ENCODE measurements at regions of chr19 and their contacts with region 1.

Region 1: GRCh38 chr19:45643024-45643926 is 4.1 kb upstream of the EML2 start:
- DNase-seq: peak; percentile 85
- H3K4me3 ChIP-seq: peak overlapping the region in 1 of 3 experiments; percentile 13
- H3K27ac ChIP-seq: peak overlapping the region; percentile 9
- H3K4me1 ChIP-seq: peaks cover 42% of the 10 kb centered on the region
- H3K27me3 ChIP-seq: no peaks in the 10 kb centered on the region
- CTCF ChIP-seq: peak; percentile 98 to 99
- POLR2A ChIP-seq: no peak

Region 2: DNA sequence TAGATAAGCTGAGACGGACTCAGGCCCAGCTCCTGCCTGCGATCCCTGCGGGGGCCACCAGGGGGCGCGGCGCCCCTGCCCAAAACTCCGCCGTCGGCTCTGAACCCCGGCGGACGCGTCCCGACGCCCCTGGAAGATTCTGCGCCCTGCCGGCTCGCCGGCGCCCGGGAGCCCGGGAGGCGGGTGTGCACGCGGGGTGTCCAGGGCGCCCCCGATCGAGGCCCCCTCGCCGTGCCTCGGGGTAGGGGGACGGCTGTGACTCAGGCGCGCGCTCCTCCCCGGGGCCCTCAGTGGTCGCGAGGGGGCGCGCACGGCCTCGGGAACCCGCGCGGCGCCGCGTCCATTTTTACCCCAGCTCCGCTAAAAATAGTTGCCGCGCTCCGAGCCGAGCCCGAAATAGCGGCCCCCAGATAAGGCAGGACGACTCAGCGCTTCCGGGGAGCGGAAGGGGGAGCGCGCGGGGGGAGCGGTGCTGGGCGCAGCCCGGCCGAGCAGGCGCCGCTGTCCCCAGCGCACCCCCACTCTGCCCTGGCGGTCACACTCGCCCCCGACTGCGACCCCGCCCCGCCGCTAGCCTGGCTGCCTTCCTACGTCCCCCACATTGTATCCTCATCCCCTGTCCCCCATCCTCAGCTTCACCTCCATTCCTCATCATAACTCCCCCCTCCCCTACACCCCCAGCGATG is 203.6 kb before region 1 on chr19:
- CTCF ChIA-PET with region 1: interaction called, 28 read pairs
- POLR2A ChIA-PET with region 1: no interaction called
- dilution Hi-C with region 1: no loop called
- intact Hi-C with region 1: loop called (anchors 1 kb)
- DNase-seq: peak; percentile 65
- H3K4me3 ChIP-seq: peak overlapping the region; percentile 48 to 64 (median 52)
- H3K27ac ChIP-seq: peak overlapping the region; percentile 59
- H3K4me1 ChIP-seq: peaks cover 15% of the 10 kb centered on the region
- H3K27me3 ChIP-seq: no peaks in the 10 kb centered on the region
- CTCF ChIP-seq: peak; percentile 88 to 99
- POLR2A ChIP-seq: no peak

Region 3: GRCh38 chr19:45506246-45506990 is 136.9 kb before region 1 on chr19:
- CTCF ChIA-PET with region 1: interaction called, 5 read pairs
- POLR2A ChIA-PET with region 1: no interaction called
- dilution Hi-C with region 1: no loop called
- intact Hi-C with region 1: loop called (anchors 1 kb)
- DNase-seq: peak; percentile 88
- H3K4me3 ChIP-seq: peak overlapping the region; percentile 92 to 100 (median 96)
- H3K27ac ChIP-seq: peak overlapping the region; percentile 69
- H3K4me1 ChIP-seq: peaks cover 23% of the 10 kb centered on the region
- H3K27me3 ChIP-seq: no peaks in the 10 kb centered on the region
- CTCF ChIP-seq: peak; percentile 36 to 64
- POLR2A ChIP-seq: peak; percentile 71

Region 4: GRCh38 chr19:45569619-45570421 is 73.5 kb before region 1 on chr19:
- CTCF ChIA-PET with region 1: interaction called, 7 read pairs
- POLR2A ChIA-PET with region 1: no interaction called
- dilution Hi-C with region 1: no loop called
- intact Hi-C with region 1: loop called (anchors 1 kb)
- DNase-seq: peak; percentile 41
- H3K4me3 ChIP-seq: no peak overlapping the region
- H3K27ac ChIP-seq: peak overlapping the region; percentile 19
- H3K4me1 ChIP-seq: peaks cover 10% of the 10 kb centered on the region
- H3K27me3 ChIP-seq: no peaks in the 10 kb centered on the region
- CTCF ChIP-seq: peak; percentile 65 to 78
- POLR2A ChIP-seq: no peak

Region 5: DNA sequence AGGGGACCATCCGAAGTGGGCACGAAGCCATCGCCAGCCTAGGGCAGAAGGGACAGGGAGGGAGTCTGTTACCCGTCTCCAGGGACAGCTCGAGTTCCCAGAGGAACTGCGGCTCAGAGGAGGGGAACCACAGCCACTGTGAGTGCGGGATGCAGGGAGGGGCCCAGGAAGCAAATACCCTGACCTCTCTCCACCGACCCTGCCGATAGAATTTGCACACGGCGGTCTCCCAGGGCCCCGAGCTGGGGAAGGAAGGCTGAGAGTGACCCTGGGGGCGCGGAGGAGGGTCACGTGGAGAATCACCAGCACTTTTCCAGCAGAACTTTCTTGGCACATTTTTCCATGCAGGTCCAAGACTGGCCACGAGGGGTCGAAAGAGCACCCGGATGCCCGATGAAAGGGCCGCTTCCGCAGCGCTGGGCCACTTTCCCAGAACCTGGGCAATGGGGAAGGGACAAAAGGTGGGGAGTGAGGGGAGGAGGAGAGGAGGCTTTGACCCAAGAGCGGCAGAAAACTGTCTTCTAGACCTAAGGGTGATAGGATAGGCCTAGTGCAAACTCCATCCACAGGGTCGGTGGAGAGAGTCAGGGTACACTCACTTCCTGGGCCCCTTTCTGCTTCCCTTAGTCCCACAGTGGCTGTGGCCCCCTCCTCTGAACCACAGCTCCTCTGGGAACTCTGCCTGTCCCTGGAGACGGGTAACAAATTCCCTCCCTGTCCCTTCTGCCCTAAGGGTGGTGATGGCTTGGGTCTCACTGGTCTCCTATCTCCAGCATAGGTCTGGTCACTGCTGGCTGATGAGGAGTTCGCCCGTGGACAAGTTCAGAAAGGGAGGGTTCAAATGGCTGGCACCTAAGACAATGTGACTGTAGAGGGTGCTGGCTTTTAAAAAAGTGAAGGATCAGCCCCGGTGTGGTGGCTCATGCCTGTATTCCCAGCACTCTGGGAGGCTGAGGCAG is 35.9 kb before region 1 on chr19:
- CTCF ChIA-PET with region 1: interaction called, 91 read pairs
- POLR2A ChIA-PET with region 1: no interaction called
- dilution Hi-C with region 1: no loop called
- intact Hi-C with region 1: loop called (anchors 1 kb)
- DNase-seq: peak; percentile 84
- H3K4me3 ChIP-seq: peak overlapping the region in 2 of 3 experiments; percentile 5 to 23
- H3K27ac ChIP-seq: peak overlapping the region; percentile 64
- H3K4me1 ChIP-seq: peaks cover 9% of the 10 kb centered on the region
- H3K27me3 ChIP-seq: no peaks in the 10 kb centered on the region
- CTCF ChIP-seq: peak; percentile 89 to 90
- POLR2A ChIP-seq: peak; percentile 38

Region 6: DNA sequence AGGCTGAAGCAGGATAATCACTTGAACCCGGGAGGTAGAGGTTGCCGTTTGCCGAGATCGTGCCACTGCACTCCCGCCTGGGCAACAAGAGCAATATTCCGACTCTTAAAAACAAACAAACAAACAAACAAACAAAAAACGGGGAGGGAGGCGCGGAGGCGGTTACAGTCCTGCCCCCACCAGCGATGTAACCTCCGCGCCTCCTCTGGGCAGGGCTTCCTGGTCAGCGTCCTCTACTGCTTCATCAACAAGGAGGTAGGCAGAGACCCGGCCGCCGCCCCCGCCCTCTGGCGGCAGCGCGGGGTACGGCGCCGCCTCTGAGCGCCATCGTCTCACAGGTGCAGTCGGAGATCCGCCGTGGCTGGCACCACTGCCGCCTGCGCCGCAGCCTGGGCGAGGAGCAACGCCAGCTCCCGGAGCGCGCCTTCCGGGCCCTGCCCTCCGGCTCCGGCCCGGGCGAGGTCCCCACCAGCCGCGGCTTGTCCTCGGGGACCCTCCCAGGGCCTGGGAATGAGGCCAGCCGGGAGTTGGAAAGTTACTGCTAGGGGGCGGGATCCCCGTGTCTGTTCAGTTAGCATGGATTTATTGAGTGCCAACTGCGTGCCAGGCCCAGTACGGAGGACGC is 38.2 kb after region 1 on chr19:
- CTCF ChIA-PET with region 1: interaction called, 19 read pairs
- POLR2A ChIA-PET with region 1: no interaction called
- dilution Hi-C with region 1: no loop called
- intact Hi-C with region 1: no loop called
- DNase-seq: peak; percentile 92
- H3K4me3 ChIP-seq: peak overlapping the region; percentile 23 to 55 (median 36)
- H3K27ac ChIP-seq: no peak overlapping the region
- H3K4me1 ChIP-seq: peaks cover 11% of the 10 kb centered on the region
- H3K27me3 ChIP-seq: no peaks in the 10 kb centered on the region
- CTCF ChIP-seq: peak; percentile 94 to 98
- POLR2A ChIP-seq: no peak